BJ (cell line): ENCODE measurements at regions of chr12 and their contacts with region 1.

Region 1: GRCh38 chr12:127667131-127667685 is 599.8 kb upstream of the TMEM132C start:
- DNase-seq: peak; percentile 45
- H3K4me3 ChIP-seq: no peak overlapping the region
- H3K27me3 ChIP-seq: no peaks in the 10 kb centered on the region
- CTCF ChIP-seq: no peak

Region 2: GRCh38 chr12:126974779-126975178 is 692.4 kb before region 1 on chr12:
- CTCF ChIA-PET with region 1: no interaction called
- POLR2A ChIA-PET with region 1: no interaction called
- DNase-seq: no peak
- H3K4me3 ChIP-seq: no peak overlapping the region
- H3K27me3 ChIP-seq: no peaks in the 10 kb centered on the region
- CTCF ChIP-seq: no peak

Region 3: GRCh38 chr12:127429551-127430285 is 237.5 kb before region 1 on chr12:
- CTCF ChIA-PET with region 1: no interaction called
- POLR2A ChIA-PET with region 1: no interaction called
- DNase-seq: no peak
- H3K4me3 ChIP-seq: no peak overlapping the region
- H3K27me3 ChIP-seq: no peaks in the 10 kb centered on the region; the same call in 1 of the 2 replicates
- CTCF ChIP-seq: no peak

Region 4: GRCh38 chr12:127485528-127485927 is 181.7 kb before region 1 on chr12:
- CTCF ChIA-PET with region 1: interaction called, 14 read pairs
- POLR2A ChIA-PET with region 1: no interaction called
- DNase-seq: peak; percentile 59
- H3K4me3 ChIP-seq: no peak overlapping the region
- H3K27me3 ChIP-seq: no peaks in the 10 kb centered on the region
- CTCF ChIP-seq: peak; percentile 66

Region 5: DNA sequence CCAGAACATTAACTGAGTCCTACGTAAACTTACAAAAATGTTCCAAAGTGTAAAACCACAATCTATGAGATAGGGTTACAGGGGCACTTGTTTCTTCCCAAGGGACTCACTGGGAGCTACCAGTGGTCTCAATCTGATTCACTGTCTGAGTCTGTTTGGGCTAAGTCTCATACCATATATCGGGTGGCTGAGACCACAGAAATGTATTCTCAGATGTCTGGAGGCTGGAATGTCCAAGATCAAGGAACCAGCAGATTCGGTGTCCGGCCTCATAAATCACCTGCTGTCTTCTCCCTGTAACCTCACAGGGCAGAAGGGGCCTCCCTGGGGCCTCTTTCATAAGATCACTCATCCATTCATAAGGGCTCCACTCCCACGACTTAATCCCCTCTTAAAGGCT is 16.6 kb before region 1 on chr12:
- CTCF ChIA-PET with region 1: no interaction called
- POLR2A ChIA-PET with region 1: no interaction called
- DNase-seq: no peak
- H3K4me3 ChIP-seq: no peak overlapping the region
- H3K27me3 ChIP-seq: no peaks in the 10 kb centered on the region
- CTCF ChIP-seq: no peak

Region 6: DNA sequence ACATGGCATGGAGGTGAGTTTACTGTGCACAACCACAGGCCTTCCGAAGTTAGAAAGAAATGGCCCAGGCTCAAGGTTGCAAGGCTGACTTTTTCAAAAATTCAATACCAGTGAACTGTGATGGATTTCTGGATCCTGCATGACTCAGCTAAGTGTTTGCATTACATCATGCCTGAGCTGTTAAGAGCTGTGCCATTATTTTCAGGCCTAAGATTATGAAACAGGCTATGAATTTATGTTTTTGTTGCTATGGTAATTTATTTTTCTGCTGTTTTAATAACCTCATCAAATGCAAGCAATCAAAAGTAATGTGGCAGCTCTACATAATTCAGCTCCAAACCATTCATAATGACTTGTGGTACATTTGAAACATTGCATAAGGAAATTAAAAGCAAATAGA is 142.1 kb after region 1 on chr12:
- CTCF ChIA-PET with region 1: no interaction called
- POLR2A ChIA-PET with region 1: no interaction called
- DNase-seq: peak; percentile 61
- H3K4me3 ChIP-seq: no peak overlapping the region
- H3K27me3 ChIP-seq: no peaks in the 10 kb centered on the region
- CTCF ChIP-seq: no peak